Calu3 (cell line): ENCODE measurements at regions of chr10 and their contacts with region 1.

Region 1: GRCh38 chr10:114083040-114083439 is 39.4 kb downstream of the ADRB1 start:
- DNase-seq: peak; percentile 60
- H3K4me3 Mint-ChIP-seq: peak overlapping the region; percentile 53
- H3K27ac Mint-ChIP-seq: peak overlapping the region; percentile 84
- H3K4me1 Mint-ChIP-seq: peaks cover 26% of the 10 kb centered on the region
- H3K27me3 Mint-ChIP-seq: no peaks in the 10 kb centered on the region
- CTCF ChIP-seq: no peak

Region 2: DNA sequence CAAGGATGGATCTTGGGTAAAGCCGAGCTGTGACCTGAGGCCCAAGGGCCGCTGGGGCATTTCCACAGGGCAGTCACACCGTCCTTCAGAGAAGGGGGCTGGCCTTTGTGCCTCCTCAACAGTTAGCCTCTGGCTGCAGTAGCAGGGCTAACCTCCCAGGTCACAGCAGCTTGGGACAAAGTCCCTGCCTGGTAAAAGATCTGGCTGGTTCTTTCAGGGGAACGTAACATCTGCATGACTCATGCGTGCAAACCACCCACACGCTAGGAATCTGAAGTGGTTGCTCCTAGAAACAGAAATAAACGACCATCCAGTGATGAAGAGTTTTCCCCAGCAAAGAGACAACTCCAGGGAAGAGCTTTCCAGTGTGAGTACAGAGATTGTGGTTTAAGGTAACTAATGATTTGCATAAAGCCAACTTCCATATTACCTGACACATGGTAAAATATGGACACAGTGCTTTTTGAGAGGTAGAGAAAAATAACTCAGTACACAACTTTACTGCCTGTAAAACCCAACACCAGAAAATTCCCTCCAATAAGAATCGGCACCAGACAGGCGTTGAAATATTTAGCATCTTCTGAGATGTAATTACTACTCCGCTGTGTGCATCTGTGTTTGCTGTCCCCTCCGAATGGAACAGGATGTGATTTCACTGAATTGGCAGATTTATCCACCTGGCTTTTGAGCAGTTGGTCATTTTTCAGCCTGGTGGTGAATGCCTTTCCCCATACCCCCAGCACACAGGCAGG is 124.2 kb before region 1 on chr10:
- CTCF ChIA-PET with region 1: no interaction called
- intact Hi-C with region 1: loop called (anchors 10 kb)
- DNase-seq: peak; percentile 67
- H3K4me3 Mint-ChIP-seq: peak overlapping the region; percentile 30
- H3K27ac Mint-ChIP-seq: peak overlapping the region; percentile 80
- H3K4me1 Mint-ChIP-seq: peaks cover 48% of the 10 kb centered on the region
- H3K27me3 Mint-ChIP-seq: no peaks in the 10 kb centered on the region
- CTCF ChIP-seq: no peak

Region 3: GRCh38 chr10:114223066-114223465 is 140.0 kb after region 1 on chr10:
- CTCF ChIA-PET with region 1: no interaction called
- intact Hi-C with region 1: no loop called
- DNase-seq: no peak
- H3K4me3 Mint-ChIP-seq: no peak overlapping the region
- H3K27ac Mint-ChIP-seq: no peak overlapping the region
- H3K4me1 Mint-ChIP-seq: no peaks in the 10 kb centered on the region
- H3K27me3 Mint-ChIP-seq: peaks cover 9% of the 10 kb centered on the region
- CTCF ChIP-seq: no peak